ENCODE measurements at regions of chr14 and their contacts with region 1.

Region 1: DNA sequence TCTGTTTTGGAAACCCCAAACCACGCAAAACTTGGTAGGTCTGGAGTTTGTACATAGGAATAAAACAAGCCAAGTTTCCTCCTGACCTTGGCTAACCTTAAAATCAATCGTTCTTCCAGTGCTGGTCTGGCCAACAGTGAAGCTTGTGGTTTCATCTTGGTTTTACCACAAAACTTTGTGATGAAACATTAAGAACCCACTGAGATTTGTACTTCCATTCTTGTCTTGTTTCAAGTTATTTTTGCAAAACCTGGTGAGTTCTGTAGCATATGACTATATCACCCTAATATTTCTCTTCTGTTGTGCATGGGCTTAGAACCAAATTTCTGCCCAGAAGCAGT is 26.4 kb downstream of the SIX1 start:
- DNase-seq: no peak
- ATAC-seq: no peak
- H3K4me3 ChIP-seq: no peak overlapping the region
- H3K27ac ChIP-seq: no peak overlapping the region
- H3K4me1 ChIP-seq: peaks cover 39% of the 10 kb centered on the region
- H3K27me3 ChIP-seq: no peaks in the 10 kb centered on the region; a peak in 1 of 5 replicates
- CTCF ChIP-seq: no peak
- EP300 ChIP-seq: no peak
- POLR2A ChIP-seq: no peak
- RAD21 ChIP-seq: no peak

Region 2: GRCh38 chr14:60980811-60981632 is 358.1 kb after region 1 on chr14 and contains the starts of genes SLC38A6 and TRMT5:
- CTCF ChIA-PET with region 1: no interaction called
- POLR2A ChIA-PET with region 1: interaction called, 4 read pairs
- in situ Hi-C with region 1: no loop called
- intact Hi-C with region 1: loop called (anchors 1 kb)
- DNase-seq: peak; percentile 91
- ATAC-seq: peak; percentile 97
- H3K4me3 ChIP-seq: peak within 1 kb of the TSS; percentile 62 to 93 (median 90)
- H3K27ac ChIP-seq: peak within 1 kb of the TSS; percentile 82
- H3K4me1 ChIP-seq: peaks cover 44% of the 10 kb centered on the region
- H3K27me3 ChIP-seq: no peaks in the 10 kb centered on the region; a peak in 1 of 5 replicates
- CTCF ChIP-seq: 0 out of 2 replicates have a peak, but pooled peaks have one; percentile 13
- EP300 ChIP-seq: peak; percentile 16 to 43; a peak in 2 of 4 replicates
- POLR2A ChIP-seq: peak; percentile 71 to 90
- RAD21 ChIP-seq: peak; percentile 19; the same call in 1 of the 2 replicates
- total RNA-seq, gene SLC38A6: 12.4 and 22.1 TPM in 2 replicates
- total RNA-seq, gene TRMT5: 16.0 and 26.0 TPM in 2 replicates

Region 3: DNA sequence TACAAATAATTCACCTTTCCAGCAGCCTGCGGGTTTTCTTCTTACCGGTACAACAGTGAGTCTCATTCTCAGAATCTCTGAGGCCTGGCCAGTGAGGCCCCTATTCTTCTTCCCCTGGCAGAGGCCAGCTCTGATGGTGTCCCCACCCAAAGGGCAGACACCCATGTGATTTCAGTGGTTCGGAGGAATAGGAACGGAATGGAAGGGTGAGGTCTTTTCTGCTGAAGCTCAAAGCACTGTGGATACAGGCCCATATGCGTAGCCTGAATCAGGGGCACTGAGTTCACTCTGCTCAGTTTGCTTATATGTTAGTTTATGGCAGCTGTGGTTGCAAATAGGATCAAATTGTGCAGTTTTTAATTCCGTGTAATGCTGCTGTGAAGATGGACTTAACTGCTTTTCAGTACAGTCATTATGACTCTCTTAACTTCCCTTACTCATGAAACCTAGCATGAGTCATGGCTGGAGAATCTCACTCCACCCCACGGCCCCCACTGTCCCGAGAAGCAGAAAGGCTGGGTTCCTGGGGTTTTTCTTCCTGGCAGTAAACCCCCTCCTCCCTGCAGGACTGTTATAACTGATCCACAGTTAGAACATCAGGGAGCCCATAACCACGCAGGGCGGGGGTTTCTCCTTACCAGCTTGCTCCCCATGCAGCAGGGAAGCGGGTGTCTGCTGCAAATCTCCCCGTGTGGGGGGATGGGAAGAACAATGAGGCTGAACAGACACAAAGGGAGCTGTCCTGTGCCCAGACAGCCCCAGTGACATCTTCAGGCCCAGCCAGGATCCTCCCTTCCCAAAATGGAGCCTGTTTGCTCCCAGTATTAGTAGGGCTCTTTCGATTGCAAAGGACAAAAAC is 480.8 kb after region 1 on chr14:
- CTCF ChIA-PET with region 1: no interaction called
- POLR2A ChIA-PET with region 1: no interaction called
- in situ Hi-C with region 1: loop called (anchors 10 kb)
- intact Hi-C with region 1: loop called (anchors 1 kb)
- DNase-seq: peak; percentile 78
- ATAC-seq: peak; percentile 20
- H3K4me3 ChIP-seq: peak overlapping the region; percentile 8 to 56 (median 38); a peak in 5 of 6 replicates
- H3K27ac ChIP-seq: peak overlapping the region; percentile 87
- H3K4me1 ChIP-seq: peaks cover 59% of the 10 kb centered on the region
- H3K27me3 ChIP-seq: no peaks in the 10 kb centered on the region
- CTCF ChIP-seq: no peak
- EP300 ChIP-seq: peak in 1 of 2 experiments; percentile 43; a peak in 1 of 4 replicates
- POLR2A ChIP-seq: 0 out of 4 replicates have a peak, but pooled peaks of 1 of the 2 experiments have one; percentile 2
- RAD21 ChIP-seq: no peak

Region 4: GRCh38 chr14:61196792-61197191 is 573.9 kb after region 1 on chr14:
- CTCF ChIA-PET with region 1: no interaction called
- POLR2A ChIA-PET with region 1: no interaction called
- in situ Hi-C with region 1: loop called (anchors 10 kb)
- intact Hi-C with region 1: loop called (anchors 1 kb)
- DNase-seq: peak; percentile 31
- ATAC-seq: peak; percentile 85
- H3K4me3 ChIP-seq: no peak overlapping the region
- H3K27ac ChIP-seq: no peak overlapping the region
- H3K4me1 ChIP-seq: no peaks in the 10 kb centered on the region; the same call in 1 of the 2 replicates
- H3K27me3 ChIP-seq: no peaks in the 10 kb centered on the region
- CTCF ChIP-seq: peak; percentile 69
- EP300 ChIP-seq: no peak
- POLR2A ChIP-seq: no peak
- RAD21 ChIP-seq: 0 out of 2 replicates have a peak, but pooled peaks have one; percentile 19

Measured in HepG2 (cell line).